ENCODE measurements at regions of chr18 and their contacts with region 1.

Region 1: GRCh38 chr18:46393230-46393629 is 263.8 kb downstream of the LOXHD1 start:
- DNase-seq: no peak
- ATAC-seq: no peak
- H3K4me3 ChIP-seq: no peak overlapping the region
- H3K27ac ChIP-seq: no peak overlapping the region
- H3K4me1 ChIP-seq: peaks cover 4 to 16% of the 10 kb centered on the region in 2 donors
- H3K27me3 ChIP-seq: no peaks in the 10 kb centered on the region
- CTCF ChIP-seq: no peak
- POLR2A ChIP-seq: no peak

Region 2: DNA sequence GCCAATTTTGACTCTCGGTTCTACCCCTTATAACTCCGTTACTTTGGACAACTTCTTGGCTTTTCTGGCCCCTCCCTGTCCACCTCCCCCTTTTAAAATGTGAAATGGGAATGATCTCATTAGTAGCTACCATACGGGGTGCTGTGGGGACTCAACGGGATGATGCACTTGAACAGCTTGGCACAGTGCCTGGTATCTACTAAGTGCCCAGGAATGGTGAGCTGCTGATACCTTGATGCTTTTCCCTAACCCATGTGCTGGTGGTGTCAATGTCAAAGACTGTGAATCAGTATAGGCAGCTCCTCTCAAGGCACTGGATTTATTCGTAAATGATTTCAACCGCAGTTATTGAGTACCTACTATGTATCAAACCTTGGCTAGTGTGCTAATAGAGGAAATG is 59.6 kb after region 1 on chr18:
- in situ Hi-C with region 1: no loop called
- intact Hi-C with region 1: no loop called
- DNase-seq: no peak
- ATAC-seq: no peak
- H3K4me3 ChIP-seq: no peak overlapping the region
- H3K27ac ChIP-seq: no peak overlapping the region
- H3K4me1 ChIP-seq: no peaks in the 10 kb centered on the region
- H3K27me3 ChIP-seq: no peaks in the 10 kb centered on the region
- CTCF ChIP-seq: no peak
- POLR2A ChIP-seq: no peak

Region 3: GRCh38 chr18:46481048-46481846 is 88.0 kb after region 1 on chr18:
- in situ Hi-C with region 1: loop called in 1 of 4 experiments (anchors 25 kb)
- intact Hi-C with region 1: no loop called
- DNase-seq: peak in 1 of 2 donors; percentile 32
- ATAC-seq: peak in 1 of 2 donors; percentile 76
- H3K4me3 ChIP-seq: no peak overlapping the region
- H3K27ac ChIP-seq: no peak overlapping the region
- H3K4me1 ChIP-seq: no peaks in the 10 kb centered on the region
- H3K27me3 ChIP-seq: no peaks in the 10 kb centered on the region
- CTCF ChIP-seq: peak; percentile 48 to 74 (median 63)
- POLR2A ChIP-seq: no peak

Region 4: GRCh38 chr18:46772357-46772756 is 379.1 kb after region 1 on chr18:
- in situ Hi-C with region 1: no loop called
- intact Hi-C with region 1: no loop called
- DNase-seq: no peak
- ATAC-seq: no peak
- H3K4me3 ChIP-seq: no peak overlapping the region
- H3K27ac ChIP-seq: peak overlapping the region in 1 of 4 donors; percentile 8
- H3K4me1 ChIP-seq: peaks cover 28% of the 10 kb centered on the region in 2 donors
- H3K27me3 ChIP-seq: no peaks in the 10 kb centered on the region
- CTCF ChIP-seq: peak in 1 of 5 experiments; percentile 2
- POLR2A ChIP-seq: no peak